Activated CD4-positive, alpha-beta memory T cell treated with anti-CD3 and anti-CD28 coated beads for 36 hours (primary cell): ENCODE measurements at regions of chr7 and their contacts with region 1.

Region 1: DNA sequence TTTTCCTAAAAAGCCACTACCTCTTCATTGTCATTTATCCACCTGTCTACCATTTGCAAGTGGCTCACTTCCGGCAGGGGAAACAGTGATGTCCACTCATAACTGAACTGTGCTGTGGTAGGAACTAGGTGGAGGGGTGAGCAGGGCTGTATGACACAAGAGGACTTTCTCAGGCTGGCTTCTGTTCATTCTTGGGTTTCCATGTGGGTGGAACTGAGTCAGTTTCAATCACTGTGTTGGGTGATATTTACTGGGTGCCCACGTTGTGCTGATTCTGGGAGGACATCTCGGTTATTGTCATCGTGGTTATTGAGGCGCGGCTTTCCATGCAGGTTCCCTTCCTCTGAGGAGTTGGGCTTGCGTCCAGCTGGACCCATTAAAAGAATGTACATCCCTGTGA is 38.8 kb downstream of the RAMP3 start:
- DNase-seq: peak; percentile 87
- H3K4me3 Mint-ChIP-seq: no peak overlapping the region
- H3K27ac Mint-ChIP-seq: no peak overlapping the region
- H3K4me1 Mint-ChIP-seq: peaks cover 35% of the 10 kb centered on the region
- H3K27me3 Mint-ChIP-seq: peaks cover 34% of the 10 kb centered on the region

Region 2: GRCh38 chr7:45543461-45543860 is 347.1 kb after region 1 on chr7:
- CTCF ChIA-PET with region 1: no interaction called
- POLR2A ChIA-PET with region 1: no interaction called
- intact Hi-C with region 1: loop called (anchors 5 kb)
- DNase-seq: no peak
- H3K4me3 Mint-ChIP-seq: no peak overlapping the region
- H3K27ac Mint-ChIP-seq: no peak overlapping the region
- H3K4me1 Mint-ChIP-seq: peaks cover 2% of the 10 kb centered on the region
- H3K27me3 Mint-ChIP-seq: peaks cover 1% of the 10 kb centered on the region